AG04450 (cell line): ENCODE measurements at regions of chr1 and their contacts with region 1.

Region 1: DNA sequence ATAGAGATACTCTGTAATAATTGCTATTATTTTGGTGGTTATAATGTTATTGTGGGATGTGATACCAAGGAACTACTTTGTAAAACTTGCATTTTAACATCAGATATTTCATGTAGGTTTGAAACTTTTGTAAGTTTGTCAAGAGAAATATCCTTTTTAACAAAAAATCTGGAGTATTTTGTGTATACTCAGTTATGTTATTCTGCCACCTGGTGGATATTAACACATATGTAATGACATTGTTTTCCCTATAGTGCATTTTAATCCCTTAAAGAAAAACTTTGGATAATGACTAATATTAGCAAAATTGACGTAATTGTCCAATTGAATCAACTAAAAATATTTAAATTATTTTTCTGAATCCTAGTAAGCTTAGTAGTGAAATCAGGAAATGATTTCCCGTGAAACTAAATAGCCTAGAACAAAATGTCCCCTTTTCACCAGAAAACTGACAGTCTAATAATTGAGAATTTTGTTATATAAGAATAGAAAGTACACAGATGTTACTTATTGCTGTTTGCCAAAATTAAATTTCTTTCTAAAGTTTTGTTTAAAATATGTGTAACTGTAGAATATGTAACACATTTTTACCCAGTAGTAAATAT is 39.6 kb downstream of the KCTD3 start:
- DNase-seq: no peak
- H3K4me3 ChIP-seq: no peak overlapping the region
- H3K27ac ChIP-seq: no peak overlapping the region
- H3K27me3 ChIP-seq: no peaks in the 10 kb centered on the region
- CTCF ChIP-seq: peak; percentile 47

Region 2: DNA sequence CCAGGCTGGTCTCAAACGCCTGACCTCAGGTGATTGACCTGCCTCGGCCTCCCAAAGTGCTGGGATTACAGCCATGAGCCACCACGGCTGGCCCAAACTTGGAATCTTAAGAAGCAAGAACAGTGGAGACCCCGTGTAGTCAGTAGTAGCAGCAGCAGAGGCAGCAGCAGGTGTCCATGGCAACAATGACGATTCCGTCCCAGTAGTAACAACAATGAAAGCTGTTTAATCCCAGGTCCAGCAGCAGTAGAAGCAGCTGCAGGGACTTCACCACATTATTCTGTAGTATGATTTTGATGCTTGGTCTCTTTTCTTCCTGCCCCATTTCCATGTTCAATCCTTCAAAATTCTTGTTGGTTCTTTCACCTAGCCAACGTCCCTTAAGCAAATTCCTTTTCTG is 109.1 kb before region 1 on chr1:
- CTCF ChIA-PET with region 1: no interaction called
- POLR2A ChIA-PET with region 1: no interaction called
- DNase-seq: no peak
- H3K4me3 ChIP-seq: no peak overlapping the region
- H3K27ac ChIP-seq: no peak overlapping the region
- H3K27me3 ChIP-seq: no peaks in the 10 kb centered on the region
- CTCF ChIP-seq: no peak

Region 3: DNA sequence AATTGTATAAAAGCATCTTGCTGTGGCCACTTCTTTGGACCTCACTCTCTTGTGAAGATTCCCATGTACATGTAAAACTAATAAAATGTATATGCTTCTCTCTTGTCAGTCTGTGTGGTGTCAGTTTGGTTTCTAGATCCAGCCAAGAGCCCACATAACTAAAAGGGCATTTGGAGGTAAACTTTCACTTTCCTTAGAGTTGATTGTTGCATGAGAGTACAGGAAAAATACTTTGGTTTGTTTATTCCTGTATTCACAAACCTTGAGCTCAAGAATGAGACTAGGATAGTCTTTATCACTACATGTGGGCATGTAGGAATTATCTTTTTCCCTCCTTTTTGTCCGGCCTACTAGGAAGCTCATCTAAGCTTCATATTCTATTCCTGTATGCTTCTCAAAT is 11.3 kb after region 1 on chr1:
- CTCF ChIA-PET with region 1: interaction called, 10 read pairs
- POLR2A ChIA-PET with region 1: no interaction called
- DNase-seq: no peak
- H3K4me3 ChIP-seq: no peak overlapping the region
- H3K27ac ChIP-seq: no peak overlapping the region
- H3K27me3 ChIP-seq: no peaks in the 10 kb centered on the region
- CTCF ChIP-seq: no peak

Region 4: GRCh38 chr1:215631489-215631888 is 24.8 kb after region 1 on chr1:
- CTCF ChIA-PET with region 1: no interaction called
- POLR2A ChIA-PET with region 1: no interaction called
- DNase-seq: no peak
- H3K4me3 ChIP-seq: no peak overlapping the region
- H3K27ac ChIP-seq: no peak overlapping the region
- H3K27me3 ChIP-seq: no peaks in the 10 kb centered on the region
- CTCF ChIP-seq: no peak